Left ventricle myocardium superior (tissue), 1 donor: ENCODE measurements at regions of chr4 and their contacts with region 1.

Region 1: DNA sequence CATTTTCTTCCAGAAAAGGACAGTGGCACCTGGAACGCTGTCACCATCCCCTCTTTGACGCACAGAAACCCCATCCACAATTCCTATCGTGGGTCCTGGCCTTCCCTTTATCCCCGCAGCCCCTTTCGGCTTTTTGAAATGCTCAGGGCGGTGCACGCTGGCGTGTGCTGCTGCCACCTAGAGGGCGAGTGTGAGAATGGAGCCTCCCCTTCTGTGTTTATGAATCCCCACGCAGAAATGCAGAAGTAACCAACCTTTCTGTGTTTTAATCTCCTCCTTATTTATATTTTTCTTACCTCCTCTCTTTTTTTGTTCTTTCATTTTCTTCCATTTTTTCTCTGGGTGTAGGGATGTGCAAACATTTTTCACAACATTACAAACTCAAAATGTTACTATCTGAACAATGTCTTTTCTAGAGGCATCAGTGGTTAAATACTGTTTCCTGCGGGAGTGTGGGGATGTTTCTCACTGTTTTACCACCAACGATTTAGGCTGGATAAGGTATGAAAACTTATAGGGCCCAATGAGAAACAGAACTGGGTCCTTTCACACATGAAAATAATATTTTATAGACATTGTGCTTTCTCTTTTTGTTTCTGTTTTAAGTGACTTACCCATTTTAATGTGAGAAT is 50.0 kb downstream of the TMA16 start:
- DNase-seq: peak; percentile 68
- ATAC-seq: peak; percentile 81

Region 2: DNA sequence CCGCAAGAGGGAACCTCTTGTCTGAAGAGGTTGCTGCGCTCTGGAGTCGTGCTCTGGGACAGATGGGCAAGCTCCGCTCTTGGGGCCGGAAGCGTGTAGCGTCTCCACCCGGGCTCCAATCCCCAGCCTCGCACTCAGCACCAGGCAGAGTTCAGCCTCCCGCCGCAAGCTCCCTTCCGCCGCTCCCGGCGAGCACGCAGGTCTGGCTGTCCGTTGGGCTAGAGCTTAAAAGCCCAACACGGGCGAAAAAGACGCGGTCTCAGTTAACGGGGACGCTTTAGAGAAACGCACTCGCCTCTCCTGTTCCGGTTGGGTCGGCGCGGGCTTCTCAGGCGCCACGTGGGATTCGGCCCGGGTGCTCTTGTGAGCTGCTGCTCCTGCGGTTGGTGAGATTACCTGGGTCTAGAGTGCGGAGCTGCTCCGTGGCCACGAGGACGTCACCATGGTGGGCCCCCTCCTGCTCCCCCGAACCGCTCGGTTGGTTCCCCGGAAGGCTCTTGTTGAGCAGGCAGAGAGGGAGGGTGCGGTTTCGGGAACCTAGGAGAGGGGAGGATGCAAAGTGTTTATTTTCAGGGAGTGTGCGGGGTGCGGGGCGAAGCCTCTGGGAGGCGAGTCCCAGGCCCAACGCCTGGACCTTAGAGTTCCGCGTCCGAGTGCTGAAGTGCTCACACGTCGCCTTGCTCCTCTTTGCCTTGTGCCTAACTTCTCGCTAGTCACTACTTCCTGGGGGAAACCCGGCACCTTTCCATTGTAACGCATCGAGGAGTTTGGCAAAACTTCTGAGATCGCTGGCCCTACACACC is 50.0 kb before region 1 on chr4 and contains the start of gene TMA16:
- intact Hi-C with region 1: loop called (anchors 5 kb)
- DNase-seq: peak; percentile 86
- ATAC-seq: peak; percentile 96
- total RNA-seq, gene TMA16: 9.1 TPM